Activated T-helper 2 cell treated with anti-CD3 and anti-CD28 coated beads, Interferon-gamma antibody, Interleukin-2, Interleukin-4, amounts not matched to agents 10 μg/mL and 5 μg/mL and 100 μg/mL, durations not matched to agents 14 hours and 24 hours and 36 hours (primary cell): ENCODE measurements at regions of chr9 and their contacts with region 1.

Region 1: GRCh38 chr9:22244141-22245011 is 202.2 kb upstream of the DMRTA1 start:
- DNase-seq: no peak
- H3K4me3 Mint-ChIP-seq: no peak overlapping the region
- H3K27ac Mint-ChIP-seq: no peak overlapping the region
- H3K4me1 Mint-ChIP-seq: peaks cover 26% of the 10 kb centered on the region
- H3K27me3 Mint-ChIP-seq: peaks cover 50% of the 10 kb centered on the region

Region 2: GRCh38 chr9:22030101-22030598 is 214.2 kb before region 1 on chr9:
- intact Hi-C with region 1: loop called (anchors 5 kb)
- DNase-seq: no peak
- H3K4me3 Mint-ChIP-seq: no peak overlapping the region
- H3K27ac Mint-ChIP-seq: peak overlapping the region; percentile 34
- H3K4me1 Mint-ChIP-seq: peaks cover 35% of the 10 kb centered on the region
- H3K27me3 Mint-ChIP-seq: peaks cover 9% of the 10 kb centered on the region

Region 3: GRCh38 chr9:22452415-22453010 is 208.1 kb after region 1 on chr9:
- intact Hi-C with region 1: loop called (anchors 1 kb)
- DNase-seq: no peak
- H3K4me3 Mint-ChIP-seq: no peak overlapping the region
- H3K27ac Mint-ChIP-seq: no peak overlapping the region
- H3K4me1 Mint-ChIP-seq: peaks cover 4% of the 10 kb centered on the region
- H3K27me3 Mint-ChIP-seq: peaks cover 28% of the 10 kb centered on the region